Transverse colon (tissue), 4 donors: ENCODE measurements at regions of chr6 and their contacts with region 1.

Region 1: GRCh38 chr6:103210686-103211085 is 1649.0 kb downstream of the HACE1 start:
- DNase-seq: no peak
- H3K4me3 ChIP-seq: no peak overlapping the region
- H3K27ac ChIP-seq: no peak overlapping the region
- H3K4me1 ChIP-seq: no peaks in the 10 kb centered on the region
- H3K27me3 ChIP-seq: no peaks in the 10 kb centered on the region
- CTCF ChIP-seq: no peak
- EP300 ChIP-seq: no peak
- POLR2A ChIP-seq: no peak

Region 2: DNA sequence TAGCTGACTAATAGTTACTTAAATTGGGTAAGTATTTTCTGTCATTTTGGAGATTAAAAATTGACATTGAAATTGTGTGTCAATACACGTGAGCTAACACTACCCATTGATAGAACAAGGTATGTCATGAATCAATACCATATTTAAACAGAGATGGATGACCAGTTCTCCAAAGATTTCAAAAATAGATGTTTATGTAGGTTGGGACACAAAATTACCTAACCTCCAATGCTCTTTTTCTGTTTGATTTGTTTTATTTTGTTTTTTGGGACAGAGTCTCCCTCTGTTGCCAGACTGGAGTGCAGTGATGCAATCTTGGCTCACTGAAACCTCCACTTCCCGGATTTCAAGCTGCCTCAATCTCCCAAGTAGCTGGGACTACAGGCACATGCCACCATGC is 325.5 kb before region 1 on chr6:
- in situ Hi-C with region 1: no loop called
- intact Hi-C with region 1: no loop called
- DNase-seq: no peak
- H3K4me3 ChIP-seq: no peak overlapping the region
- H3K27ac ChIP-seq: no peak overlapping the region
- H3K4me1 ChIP-seq: no peaks in the 10 kb centered on the region
- H3K27me3 ChIP-seq: no peaks in the 10 kb centered on the region
- CTCF ChIP-seq: no peak
- EP300 ChIP-seq: no peak
- POLR2A ChIP-seq: no peak

Region 3: GRCh38 chr6:103255132-103255531 is 44.4 kb after region 1 on chr6:
- in situ Hi-C with region 1: no loop called
- intact Hi-C with region 1: no loop called
- DNase-seq: no peak
- H3K4me3 ChIP-seq: no peak overlapping the region
- H3K27ac ChIP-seq: no peak overlapping the region
- H3K4me1 ChIP-seq: no peaks in the 10 kb centered on the region
- H3K27me3 ChIP-seq: no peaks in the 10 kb centered on the region
- CTCF ChIP-seq: no peak
- EP300 ChIP-seq: no peak
- POLR2A ChIP-seq: no peak

Region 4: DNA sequence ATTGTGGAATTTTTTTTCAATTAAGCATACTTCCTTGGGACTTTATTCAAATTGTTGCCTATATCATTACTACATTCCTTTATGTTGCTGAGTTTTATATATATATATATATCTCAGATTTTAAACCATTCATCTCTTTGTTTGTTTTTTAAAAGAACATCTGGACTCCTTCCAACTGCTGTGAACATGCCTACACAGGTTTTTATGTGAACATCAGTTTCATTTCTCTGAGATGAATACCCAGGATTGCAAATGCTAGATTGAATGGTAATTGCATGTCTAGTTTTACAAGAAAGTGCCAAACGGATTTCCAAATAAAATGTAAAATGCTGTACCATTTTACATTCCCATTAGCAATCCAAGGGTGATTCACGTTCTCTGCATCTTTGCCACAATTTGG is 359.7 kb after region 1 on chr6:
- in situ Hi-C with region 1: no loop called
- intact Hi-C with region 1: no loop called
- DNase-seq: no peak
- H3K4me3 ChIP-seq: no peak overlapping the region
- H3K27ac ChIP-seq: no peak overlapping the region
- H3K4me1 ChIP-seq: no peaks in the 10 kb centered on the region
- H3K27me3 ChIP-seq: no peaks in the 10 kb centered on the region
- CTCF ChIP-seq: no peak
- EP300 ChIP-seq: no peak
- POLR2A ChIP-seq: no peak

Region 5: GRCh38 chr6:104207635-104208034 is 996.9 kb after region 1 on chr6:
- in situ Hi-C with region 1: no loop called
- intact Hi-C with region 1: loop called (anchors 5 kb)
- DNase-seq: no peak
- H3K4me3 ChIP-seq: no peak overlapping the region
- H3K27ac ChIP-seq: no peak overlapping the region
- H3K4me1 ChIP-seq: no peaks in the 10 kb centered on the region
- H3K27me3 ChIP-seq: no peaks in the 10 kb centered on the region
- CTCF ChIP-seq: no peak
- EP300 ChIP-seq: no peak
- POLR2A ChIP-seq: no peak